B cell (primary cell): ENCODE measurements at regions of chr2 and their contacts with region 1.

Region 1: GRCh38 chr2:184730288-184730687 is 132.0 kb downstream of the ZNF804A start:
- DNase-seq: peak; percentile 17
- ATAC-seq: peak; percentile 73
- H3K4me3 ChIP-seq: no peak overlapping the region
- H3K4me3 Mint-ChIP-seq: no peak overlapping the region
- H3K27ac ChIP-seq: no peak overlapping the region
- H3K27ac Mint-ChIP-seq: peak overlapping the region; percentile 4
- H3K4me1 ChIP-seq: peaks cover 0 to 3% of the 10 kb centered on the region in 2 donors
- H3K4me1 Mint-ChIP-seq: peaks cover 22% of the 10 kb centered on the region
- H3K27me3 ChIP-seq: no peaks in the 10 kb centered on the region
- H3K27me3 Mint-ChIP-seq: no peaks in the 10 kb centered on the region
- CTCF ChIP-seq: no peak

Region 2: GRCh38 chr2:184598316-184599053 is 131.8 kb before region 1 on chr2 and contains the start of gene ZNF804A:
- CTCF ChIA-PET with region 1: no interaction called
- POLR2A ChIA-PET with region 1: no interaction called
- intact Hi-C with region 1: loop called (anchors 5 kb)
- DNase-seq: peak; percentile 79
- ATAC-seq: peak; percentile 86
- H3K4me3 ChIP-seq: peak within 1 kb of the TSS; percentile 38 to 66 (median 62)
- H3K4me3 Mint-ChIP-seq: peak within 1 kb of the TSS; percentile 91
- H3K27ac ChIP-seq: peak within 1 kb of the TSS; percentile 37 to 73
- H3K27ac Mint-ChIP-seq: peak within 1 kb of the TSS; percentile 76
- H3K4me1 ChIP-seq: peaks cover 16 to 26% of the 10 kb centered on the region in 2 donors
- H3K4me1 Mint-ChIP-seq: peaks cover 28% of the 10 kb centered on the region
- H3K27me3 ChIP-seq: peaks cover 0 to 14% (median 8%) of the 10 kb centered on the region in 4 experiments
- H3K27me3 Mint-ChIP-seq: peaks cover 15% of the 10 kb centered on the region
- CTCF ChIP-seq: no peak
- total RNA-seq, gene ZNF804A: 2.4 TPM in 2 replicates

Region 3: GRCh38 chr2:184834699-184835397 is 104.6 kb after region 1 on chr2:
- CTCF ChIA-PET with region 1: no interaction called
- POLR2A ChIA-PET with region 1: no interaction called
- intact Hi-C with region 1: no loop called
- DNase-seq: no peak
- ATAC-seq: no peak
- H3K4me3 ChIP-seq: no peak overlapping the region
- H3K4me3 Mint-ChIP-seq: no peak overlapping the region
- H3K27ac ChIP-seq: no peak overlapping the region
- H3K27ac Mint-ChIP-seq: no peak overlapping the region
- H3K4me1 ChIP-seq: no peaks in the 10 kb centered on the region
- H3K4me1 Mint-ChIP-seq: no peaks in the 10 kb centered on the region
- H3K27me3 ChIP-seq: no peaks in the 10 kb centered on the region
- H3K27me3 Mint-ChIP-seq: no peaks in the 10 kb centered on the region
- CTCF ChIP-seq: no peak

Region 4: DNA sequence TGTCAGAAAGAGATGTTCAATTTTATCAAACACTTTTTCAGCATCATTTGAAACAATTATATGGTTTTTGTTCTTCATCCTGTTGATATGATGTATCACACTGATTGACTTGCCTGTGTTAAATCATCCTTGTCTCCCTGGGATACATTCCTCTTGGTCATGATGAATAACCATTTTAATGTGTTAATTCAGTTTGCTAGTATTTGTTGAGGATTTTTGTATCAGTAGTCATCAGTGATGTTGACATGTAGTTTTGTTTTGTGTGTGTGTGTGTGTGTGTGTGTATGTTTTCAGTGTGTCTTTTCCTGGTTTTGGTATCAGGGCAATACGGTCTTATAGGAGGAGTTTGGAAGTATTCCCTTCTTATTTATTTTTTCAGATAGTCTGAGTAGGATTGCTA is 193.5 kb after region 1 on chr2:
- CTCF ChIA-PET with region 1: no interaction called
- POLR2A ChIA-PET with region 1: no interaction called
- intact Hi-C with region 1: no loop called
- DNase-seq: no peak
- ATAC-seq: no peak
- H3K4me3 ChIP-seq: no peak overlapping the region
- H3K4me3 Mint-ChIP-seq: no peak overlapping the region
- H3K27ac ChIP-seq: no peak overlapping the region
- H3K27ac Mint-ChIP-seq: no peak overlapping the region
- H3K4me1 ChIP-seq: no peaks in the 10 kb centered on the region
- H3K4me1 Mint-ChIP-seq: no peaks in the 10 kb centered on the region
- H3K27me3 ChIP-seq: no peaks in the 10 kb centered on the region
- H3K27me3 Mint-ChIP-seq: no peaks in the 10 kb centered on the region
- CTCF ChIP-seq: no peak